ENCODE measurements at regions of chr12 and their contacts with region 1.

Region 1: DNA sequence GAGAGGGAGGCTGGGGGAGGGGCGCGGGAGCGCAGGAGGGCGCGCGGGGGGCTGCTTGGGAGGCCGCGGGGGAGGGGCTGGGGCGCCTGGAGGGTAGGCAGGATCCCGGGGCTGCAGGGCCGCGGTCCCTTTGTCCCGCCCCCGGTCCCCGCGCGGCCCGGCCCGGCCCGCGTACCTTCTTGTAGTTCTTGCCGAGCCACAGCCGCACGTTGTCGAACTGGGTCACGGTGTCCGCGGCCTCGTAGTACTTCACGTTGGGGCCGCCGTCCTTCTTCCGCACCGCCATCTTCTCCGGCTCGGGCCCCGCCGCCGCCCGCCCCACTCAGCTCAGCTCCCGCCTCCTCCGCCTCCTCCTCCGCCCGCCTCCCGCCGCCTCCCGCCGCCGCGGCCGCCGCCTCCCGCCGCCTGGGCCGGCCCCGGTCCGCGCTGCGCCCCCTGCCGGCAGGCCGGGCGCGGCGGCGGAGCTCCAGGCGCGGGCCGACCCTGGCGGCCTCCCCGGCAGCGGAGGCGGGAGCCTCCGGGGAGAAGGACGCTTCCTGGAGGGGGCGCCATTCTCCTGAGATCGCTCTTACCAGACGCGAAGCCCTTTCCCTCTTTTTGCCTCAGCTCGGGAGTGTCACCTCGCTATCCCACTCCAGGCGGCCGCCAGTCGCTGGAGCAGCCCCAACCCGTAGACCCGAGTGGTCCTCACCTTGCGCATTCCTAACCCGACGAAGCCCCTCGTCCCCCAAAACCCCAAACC is at the start of gene SMARCC2:
- DNase-seq: peak; percentile 94
- ATAC-seq: peak; percentile 82
- H3K4me3 Mint-ChIP-seq: peak within 1 kb of the TSS; percentile 82
- H3K27ac Mint-ChIP-seq: peak within 1 kb of the TSS; percentile 96
- H3K4me1 Mint-ChIP-seq: peaks cover 38% of the 10 kb centered on the region
- H3K27me3 Mint-ChIP-seq: no peaks in the 10 kb centered on the region
- total RNA-seq, gene SMARCC2: 96.9 to 123 TPM

Region 2: GRCh38 chr12:54821676-54822075 is 1367.7 kb before region 1 on chr12:
- CTCF ChIA-PET with region 1: no interaction called
- POLR2A ChIA-PET with region 1: no interaction called
- intact Hi-C with region 1: no loop called
- DNase-seq: no peak
- ATAC-seq: no peak
- H3K4me3 Mint-ChIP-seq: no peak overlapping the region
- H3K27ac Mint-ChIP-seq: no peak overlapping the region
- H3K4me1 Mint-ChIP-seq: no peaks in the 10 kb centered on the region
- H3K27me3 Mint-ChIP-seq: peaks cover 8% of the 10 kb centered on the region

Region 3: DNA sequence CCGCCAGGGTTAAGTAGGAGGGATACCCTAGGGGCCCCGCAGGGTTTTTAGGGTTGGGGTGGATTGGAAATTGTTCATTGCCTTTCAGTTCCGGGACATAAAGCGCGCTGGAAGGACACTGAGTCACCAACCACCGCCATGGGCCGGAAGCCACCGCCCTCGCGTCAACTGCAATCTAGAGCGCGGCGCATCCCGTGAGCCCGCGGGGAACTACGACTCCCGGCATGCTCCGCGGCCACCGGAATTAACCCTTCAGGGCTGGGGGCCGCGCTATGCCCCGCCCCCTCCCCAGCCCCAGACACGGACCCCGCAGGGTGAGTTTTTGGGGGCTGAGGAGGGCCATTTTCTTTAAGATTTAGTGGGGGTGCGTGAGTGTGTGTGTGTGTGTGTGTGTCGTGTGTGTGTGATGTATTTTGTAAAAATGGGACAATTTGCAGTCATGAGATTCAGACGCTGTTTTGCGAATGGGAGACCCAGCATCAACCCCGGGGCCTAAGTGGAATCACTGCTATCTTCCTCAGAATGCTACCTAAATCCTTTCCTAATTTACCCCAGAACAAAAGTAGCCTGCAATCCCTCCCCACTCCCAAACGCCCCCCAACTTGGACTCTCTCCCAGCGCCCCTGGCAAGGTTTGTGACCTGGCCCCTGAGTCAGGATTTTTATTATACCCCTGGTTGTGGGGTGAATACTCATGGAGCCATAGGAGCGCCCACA is 36.9 kb before region 1 on chr12 and contains the start of gene MYL6B:
- CTCF ChIA-PET with region 1: interaction called, 8 read pairs
- POLR2A ChIA-PET with region 1: interaction called, 3 read pairs
- intact Hi-C with region 1: loop called (anchors 1 to 5 kb)
- DNase-seq: peak; percentile 98
- ATAC-seq: peak; percentile 92
- H3K4me3 Mint-ChIP-seq: peak within 1 kb of the TSS; percentile 88
- H3K27ac Mint-ChIP-seq: peak within 1 kb of the TSS; percentile 99
- H3K4me1 Mint-ChIP-seq: peaks cover 29% of the 10 kb centered on the region
- H3K27me3 Mint-ChIP-seq: no peaks in the 10 kb centered on the region
- total RNA-seq, gene MYL6B: 76.3 to 79.3 TPM

Region 4: GRCh38 chr12:56178347-56178746 is 11.0 kb before region 1 on chr12:
- CTCF ChIA-PET with region 1: interaction called, 20 read pairs
- POLR2A ChIA-PET with region 1: interaction called, 3 read pairs
- intact Hi-C with region 1: no loop called
- DNase-seq: no peak
- ATAC-seq: no peak
- H3K4me3 Mint-ChIP-seq: no peak overlapping the region
- H3K27ac Mint-ChIP-seq: no peak overlapping the region
- H3K4me1 Mint-ChIP-seq: no peaks in the 10 kb centered on the region
- H3K27me3 Mint-ChIP-seq: no peaks in the 10 kb centered on the region

Region 5: GRCh38 chr12:56258057-56258819 is 68.9 kb after region 1 on chr12 and contains the start of gene ANKRD52:
- CTCF ChIA-PET with region 1: interaction called, 9 read pairs
- POLR2A ChIA-PET with region 1: no interaction called
- intact Hi-C with region 1: loop called (anchors 1 to 2 kb)
- DNase-seq: peak; percentile 90
- ATAC-seq: peak; percentile 92
- H3K4me3 Mint-ChIP-seq: peak within 1 kb of the TSS; percentile 83
- H3K27ac Mint-ChIP-seq: peak within 1 kb of the TSS; percentile 72
- H3K4me1 Mint-ChIP-seq: peaks cover 16% of the 10 kb centered on the region
- H3K27me3 Mint-ChIP-seq: no peaks in the 10 kb centered on the region
- total RNA-seq, gene ANKRD52: 29.2 to 31.0 TPM

Region 6: DNA sequence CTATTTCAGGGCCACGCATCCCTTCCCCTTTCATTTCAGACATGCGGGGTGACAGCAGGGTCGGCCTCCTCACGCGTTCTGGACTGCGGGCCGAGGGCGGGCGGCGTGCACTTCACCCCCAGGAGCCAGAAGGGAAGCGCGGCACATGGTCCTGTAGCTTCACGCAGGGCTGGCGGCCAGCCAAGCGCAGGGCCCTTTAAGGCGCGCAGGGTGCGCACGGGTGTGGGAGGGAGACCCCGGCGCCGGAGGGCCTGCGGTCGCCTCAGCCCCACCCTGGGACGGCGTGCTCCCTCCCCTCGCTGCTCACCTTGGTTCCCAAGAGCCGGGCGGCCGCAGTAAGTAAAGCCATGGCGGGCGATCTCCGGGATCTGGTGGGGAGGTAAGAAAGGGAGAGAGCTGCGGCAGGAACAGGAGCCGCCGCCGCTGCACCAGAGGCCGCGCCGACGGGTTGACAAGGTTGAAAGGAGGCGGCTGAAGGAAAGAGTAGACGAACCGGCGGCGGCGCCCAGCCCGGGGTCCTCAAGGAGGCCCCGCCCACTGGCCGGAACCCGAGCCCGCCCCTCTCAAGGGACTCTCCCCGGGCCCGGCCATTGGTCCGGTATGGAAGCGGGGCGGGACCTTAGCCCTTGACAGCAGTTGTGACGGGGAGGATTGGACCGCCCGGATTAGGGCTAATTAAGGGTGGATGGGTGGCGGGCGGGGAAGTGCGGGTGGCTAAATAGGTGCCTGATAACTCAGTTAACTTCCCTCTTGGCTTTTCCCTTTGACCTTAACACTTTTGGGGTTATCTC is 110.7 kb after region 1 on chr12 and contains the start of gene CS:
- CTCF ChIA-PET with region 1: interaction called, 5 read pairs
- POLR2A ChIA-PET with region 1: no interaction called
- intact Hi-C with region 1: loop called (anchors 1 kb)
- DNase-seq: peak; percentile 99
- ATAC-seq: peak; percentile 98
- H3K4me3 Mint-ChIP-seq: peak within 1 kb of the TSS; percentile 96
- H3K27ac Mint-ChIP-seq: peak within 1 kb of the TSS; percentile 91
- H3K4me1 Mint-ChIP-seq: peaks cover 49% of the 10 kb centered on the region
- H3K27me3 Mint-ChIP-seq: no peaks in the 10 kb centered on the region
- total RNA-seq, gene CS: 197 to 293 TPM

Region 7: GRCh38 chr12:56326533-56326932 is 137.2 kb after region 1 on chr12:
- CTCF ChIA-PET with region 1: no interaction called
- POLR2A ChIA-PET with region 1: no interaction called
- intact Hi-C with region 1: no loop called
- DNase-seq: no peak
- ATAC-seq: no peak
- H3K4me3 Mint-ChIP-seq: no peak overlapping the region
- H3K27ac Mint-ChIP-seq: no peak overlapping the region
- H3K4me1 Mint-ChIP-seq: no peaks in the 10 kb centered on the region
- H3K27me3 Mint-ChIP-seq: no peaks in the 10 kb centered on the region

Region 8: DNA sequence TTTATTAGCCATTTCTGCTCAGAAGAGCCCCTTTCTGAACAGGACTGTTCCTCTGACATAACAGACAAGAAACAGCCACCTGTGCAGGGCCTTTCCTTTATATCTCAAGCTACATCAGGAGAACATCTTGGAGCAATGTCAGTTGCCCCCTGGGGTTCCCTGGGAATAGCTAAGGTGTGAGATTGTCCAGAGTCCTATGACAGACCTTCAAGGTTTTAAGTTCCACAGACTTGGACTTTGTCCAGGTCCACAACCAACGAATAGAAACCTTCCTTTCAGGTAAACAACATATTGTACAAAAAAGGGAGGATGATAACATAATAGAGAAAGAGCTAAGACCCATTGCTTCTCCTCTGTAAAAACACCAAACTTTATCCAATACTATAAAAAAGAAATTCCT is 152.3 kb after region 1 on chr12:
- CTCF ChIA-PET with region 1: no interaction called
- POLR2A ChIA-PET with region 1: no interaction called
- intact Hi-C with region 1: no loop called
- DNase-seq: no peak
- ATAC-seq: no peak
- H3K4me3 Mint-ChIP-seq: no peak overlapping the region
- H3K27ac Mint-ChIP-seq: peak overlapping the region; percentile 15
- H3K4me1 Mint-ChIP-seq: peaks cover 41% of the 10 kb centered on the region
- H3K27me3 Mint-ChIP-seq: no peaks in the 10 kb centered on the region

Region 9: DNA sequence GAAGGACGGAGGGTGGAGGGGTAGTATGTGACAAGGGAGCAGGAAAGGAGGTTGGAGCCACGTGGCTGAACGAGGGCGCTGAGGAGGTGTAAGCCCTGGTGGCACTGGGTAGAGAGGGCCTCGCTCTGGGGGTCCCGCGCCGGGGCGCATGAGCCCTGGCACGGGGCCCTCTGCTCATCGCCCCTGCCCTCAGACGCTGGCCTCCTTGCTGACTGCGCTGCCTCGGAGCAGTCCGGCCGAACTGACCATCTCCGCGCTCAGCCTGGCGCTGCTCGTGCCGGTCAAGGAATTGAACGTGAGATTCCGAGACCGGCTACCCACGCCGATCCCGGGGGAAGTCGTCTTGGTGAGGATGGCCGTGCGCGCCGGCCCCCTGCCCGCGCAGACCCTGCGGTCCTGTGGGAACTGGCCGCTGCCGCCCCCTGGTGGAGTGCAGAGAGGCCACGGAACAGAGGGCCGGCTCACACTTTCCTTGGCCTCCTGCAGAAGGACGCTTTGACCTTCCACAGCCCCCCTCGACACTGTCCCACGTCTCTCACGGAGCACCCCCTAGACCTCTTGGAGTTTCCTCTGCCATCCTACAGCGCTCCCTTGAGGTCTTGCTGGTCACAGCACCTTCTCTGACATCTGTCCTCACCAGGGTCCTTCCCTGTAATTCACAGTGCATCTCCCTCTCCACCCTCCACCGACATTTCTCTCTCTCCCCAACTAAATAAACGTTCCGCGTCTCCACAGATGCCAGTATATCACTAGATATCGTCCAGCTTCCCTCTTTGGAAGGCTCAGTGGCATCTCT is 1432.3 kb after region 1 on chr12:
- CTCF ChIA-PET with region 1: no interaction called
- POLR2A ChIA-PET with region 1: no interaction called
- intact Hi-C with region 1: no loop called
- DNase-seq: peak; percentile 79
- ATAC-seq: peak; percentile 80
- H3K4me3 Mint-ChIP-seq: peak overlapping the region; percentile 60
- H3K27ac Mint-ChIP-seq: no peak overlapping the region
- H3K4me1 Mint-ChIP-seq: peaks cover 28% of the 10 kb centered on the region
- H3K27me3 Mint-ChIP-seq: peaks cover 84% of the 10 kb centered on the region

Measured in activated CD4-positive, alpha-beta T cell treated with anti-CD3 and anti-CD28 coated beads for 36 hours (primary cell).